ENCODE measurements at regions of chr9 and their contacts with region 1.

Region 1: DNA sequence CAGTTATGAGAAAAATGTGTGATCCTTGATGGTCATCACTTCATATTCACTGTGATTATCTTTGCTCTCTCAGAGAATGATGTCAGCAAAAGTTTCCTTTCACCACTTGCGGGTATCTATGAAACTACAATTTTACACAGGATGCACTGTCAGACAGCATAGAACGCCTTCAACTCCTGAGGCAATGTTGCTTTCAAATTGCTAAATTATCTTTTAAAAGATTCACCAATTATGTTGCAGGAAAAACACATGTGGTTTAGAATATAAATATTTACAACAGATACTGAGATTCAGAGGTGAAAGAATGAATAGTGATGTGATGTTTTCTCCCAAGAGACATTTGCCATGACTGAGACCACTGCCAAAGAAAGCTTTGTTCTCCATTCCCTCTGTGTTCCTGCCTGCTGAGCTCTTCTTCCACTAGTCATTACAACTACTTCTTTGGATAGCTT is 879.8 kb upstream of the DMAC1 start:
- DNase-seq: no peak
- ATAC-seq: no peak
- H3K4me3 ChIP-seq: no peak overlapping the region
- H3K27ac ChIP-seq: no peak overlapping the region
- H3K4me1 ChIP-seq: no peaks in the 10 kb centered on the region
- H3K27me3 ChIP-seq: no peaks in the 10 kb centered on the region

Region 2: DNA sequence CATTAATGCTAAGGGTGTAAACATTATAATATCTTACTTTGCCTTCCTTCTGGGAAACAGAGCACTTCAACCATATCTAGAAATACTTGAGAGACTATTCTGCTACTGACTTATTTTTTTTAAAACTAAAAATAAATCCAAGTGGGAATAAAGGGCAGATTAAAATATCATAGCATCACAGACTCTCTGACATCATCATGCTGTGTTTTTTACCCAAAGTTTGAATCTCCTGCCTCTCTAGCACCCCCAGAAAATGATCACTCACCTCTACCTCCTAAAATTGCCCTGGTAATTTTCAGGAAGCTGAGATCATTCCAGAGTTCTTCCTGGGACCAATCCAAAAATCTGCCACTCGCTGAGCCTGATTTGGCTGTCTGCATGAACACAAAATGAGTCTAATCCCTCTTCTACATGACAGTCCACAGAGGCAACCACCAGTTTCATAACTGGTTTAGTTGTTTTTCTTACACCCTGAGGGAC is 66.0 kb before region 1 on chr9:
- intact Hi-C with region 1: loop called in 1 of 2 experiments (anchors 10 kb)
- DNase-seq: no peak
- ATAC-seq: peak; percentile 54
- H3K4me3 ChIP-seq: peak overlapping the region in 1 of 2 donors; percentile 41
- H3K27ac ChIP-seq: no peak overlapping the region
- H3K4me1 ChIP-seq: peaks cover 3% of the 10 kb centered on the region in 2 donors
- H3K27me3 ChIP-seq: no peaks in the 10 kb centered on the region